Activated B cell treated with CpG ODN at 0.5 μM for 24 hours (primary cell): ENCODE measurements at regions of chr6 and their contacts with region 1.

Region 1: GRCh38 chr6:108896111-108896661 is 48.0 kb downstream of the ARMC2 start:
- DNase-seq: no peak
- ATAC-seq: no peak
- H3K4me3 Mint-ChIP-seq: no peak overlapping the region
- H3K27ac Mint-ChIP-seq: no peak overlapping the region
- H3K4me1 Mint-ChIP-seq: peaks cover 26% of the 10 kb centered on the region
- H3K27me3 Mint-ChIP-seq: no peaks in the 10 kb centered on the region
- CTCF ChIP-seq: no peak

Region 2: DNA sequence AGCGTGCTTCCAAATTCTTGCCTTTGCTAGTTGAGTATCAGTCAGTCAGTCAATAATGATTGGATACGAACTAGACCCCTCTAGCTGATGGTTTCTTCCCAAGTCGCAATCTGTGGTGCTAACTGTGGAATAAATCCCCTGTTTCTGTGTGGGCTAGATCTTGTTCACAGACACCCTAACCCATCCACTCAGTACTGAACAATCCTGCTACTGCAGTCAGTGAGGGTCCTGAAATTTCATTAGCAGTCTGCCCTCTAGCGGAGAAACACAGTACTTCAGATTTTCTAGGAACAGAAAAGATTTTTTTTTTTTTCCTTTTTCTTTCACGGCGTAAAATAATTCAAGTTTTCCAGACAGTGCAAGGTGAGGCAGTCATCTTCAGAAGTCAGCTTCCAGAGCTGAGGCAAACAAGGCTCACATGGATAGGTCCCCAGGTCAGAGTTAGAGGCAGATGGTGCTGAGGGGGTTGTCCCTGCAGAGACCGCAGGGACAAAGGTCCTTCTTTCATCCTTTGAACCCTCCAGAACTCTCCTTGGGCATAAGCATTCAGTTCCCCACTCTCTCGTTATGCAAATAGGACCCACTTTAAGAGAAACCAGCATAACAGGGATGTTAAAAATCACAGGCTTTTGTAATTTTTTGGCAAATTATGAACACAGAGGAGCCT is 1191.7 kb before region 1 on chr6:
- CTCF ChIA-PET with region 1: no interaction called
- POLR2A ChIA-PET with region 1: no interaction called
- intact Hi-C with region 1: no loop called
- DNase-seq: no peak
- ATAC-seq: no peak
- H3K4me3 Mint-ChIP-seq: no peak overlapping the region
- H3K27ac Mint-ChIP-seq: no peak overlapping the region
- H3K4me1 Mint-ChIP-seq: peaks cover 2% of the 10 kb centered on the region
- H3K27me3 Mint-ChIP-seq: peaks cover 2% of the 10 kb centered on the region
- CTCF ChIP-seq: peak; percentile 88

Region 3: GRCh38 chr6:108541838-108542759 is 354.1 kb before region 1 on chr6:
- CTCF ChIA-PET with region 1: interaction called, 60 read pairs
- POLR2A ChIA-PET with region 1: no interaction called
- intact Hi-C with region 1: loop called (anchors 1 kb)
- DNase-seq: peak; percentile 34
- ATAC-seq: peak; percentile 84
- H3K4me3 Mint-ChIP-seq: peak overlapping the region; percentile 41
- H3K27ac Mint-ChIP-seq: no peak overlapping the region
- H3K4me1 Mint-ChIP-seq: peaks cover 15% of the 10 kb centered on the region
- H3K27me3 Mint-ChIP-seq: peaks cover 7% of the 10 kb centered on the region
- CTCF ChIP-seq: peak; percentile 39